ENCODE measurements at regions of chr10 and their contacts with region 1.

Region 1: DNA sequence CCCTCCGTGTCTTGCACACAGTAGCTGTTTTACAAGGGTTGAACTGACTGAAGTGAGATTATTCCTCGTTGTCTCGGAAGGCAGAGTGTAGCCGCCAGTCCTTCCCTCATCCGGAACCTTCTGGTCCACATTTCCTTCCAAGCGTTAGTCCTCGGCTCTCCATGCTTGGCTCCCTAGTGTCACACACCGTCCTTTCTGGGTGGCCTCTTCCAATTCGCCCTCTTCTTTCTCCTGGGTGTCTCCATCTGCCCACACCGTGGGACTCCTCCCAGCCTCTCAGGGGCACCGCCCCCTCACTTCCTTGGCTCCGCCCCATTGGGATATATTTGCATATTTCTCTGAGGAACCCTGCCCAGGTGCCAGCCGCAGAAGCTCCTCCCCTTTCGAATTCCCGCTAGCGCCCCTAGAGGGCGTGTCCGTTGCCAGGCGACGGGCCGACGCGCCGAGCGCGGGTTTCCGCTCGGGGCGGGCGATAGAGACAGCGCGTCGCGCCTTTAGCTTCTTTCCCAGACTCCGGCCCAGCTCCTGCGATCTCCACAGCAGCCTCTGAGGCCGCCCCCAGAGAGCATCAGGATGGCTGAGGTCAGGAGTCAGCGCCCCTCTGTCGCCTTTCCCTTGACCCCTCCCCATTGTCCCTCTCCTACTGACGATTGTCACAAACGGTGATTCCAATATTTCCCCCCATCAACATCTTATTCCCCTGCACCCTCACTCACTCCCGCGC is at the start of gene CFAP58:
- DNase-seq: peak; percentile 97
- H3K4me3 ChIP-seq: peak within 1 kb of the TSS; percentile 37
- H3K27ac ChIP-seq: no peak within 1 kb of the TSS
- H3K4me1 ChIP-seq: no peaks in the 10 kb centered on the region
- H3K27me3 ChIP-seq: no peaks in the 10 kb centered on the region
- CTCF ChIP-seq: peak; percentile 43
- total RNA-seq, gene CFAP58: 0.11 TPM in 1 of 2 donors, not detected in the other

Region 2: GRCh38 chr10:104291439-104291951 is 62.0 kb before region 1 on chr10:
- intact Hi-C with region 1: loop called (anchors 5 kb)
- DNase-seq: peak; percentile 90
- H3K4me3 ChIP-seq: no peak overlapping the region
- H3K27ac ChIP-seq: no peak overlapping the region
- H3K4me1 ChIP-seq: no peaks in the 10 kb centered on the region
- H3K27me3 ChIP-seq: no peaks in the 10 kb centered on the region
- CTCF ChIP-seq: peak; percentile 100

Region 3: GRCh38 chr10:104304962-104305361 is 48.5 kb before region 1 on chr10:
- intact Hi-C with region 1: loop called (anchors 2 kb)
- DNase-seq: no peak
- H3K4me3 ChIP-seq: no peak overlapping the region
- H3K27ac ChIP-seq: no peak overlapping the region
- H3K4me1 ChIP-seq: no peaks in the 10 kb centered on the region
- H3K27me3 ChIP-seq: no peaks in the 10 kb centered on the region
- CTCF ChIP-seq: no peak

Measured in colonic mucosa (tissue), 4 donors.